IMR-90 (cell line): ENCODE measurements at regions of chr1 and their contacts with region 1.

Region 1: GRCh38 chr1:245045087-245045881 is 109.5 kb upstream of the KIF26B start:
- DNase-seq: peak; percentile 27
- ATAC-seq: peak; percentile 33
- H3K4me3 ChIP-seq: no peak overlapping the region
- H3K27ac ChIP-seq: no peak overlapping the region
- H3K4me1 ChIP-seq: no peaks in the 10 kb centered on the region; the same call in 1 of the 2 replicates
- H3K27me3 ChIP-seq: no peaks in the 10 kb centered on the region
- CTCF ChIP-seq: no peak
- POLR2A ChIP-seq: no peak
- RAD21 ChIP-seq: no peak

Region 2: DNA sequence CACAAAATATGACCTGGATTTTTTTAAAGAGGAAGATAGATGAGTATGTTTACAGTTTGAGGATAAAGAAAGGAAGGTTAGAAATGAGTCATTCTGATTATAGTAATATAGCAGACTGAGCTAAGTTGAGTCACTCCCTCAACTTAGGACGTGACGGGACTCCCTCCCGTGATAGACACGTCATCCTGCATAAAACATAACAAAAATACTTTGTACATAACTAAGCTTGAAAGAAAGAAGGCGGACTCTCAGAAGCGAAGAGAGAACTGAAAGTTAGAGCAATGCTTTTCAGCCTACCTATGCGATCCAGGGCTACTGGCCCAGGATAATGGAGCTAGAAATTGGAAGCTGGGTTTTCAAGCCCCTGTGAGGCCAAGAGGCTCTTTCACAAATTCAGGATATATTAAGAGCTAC is 445.3 kb before region 1 on chr1:
- CTCF ChIA-PET with region 1: interaction called, 4 read pairs
- POLR2A ChIA-PET with region 1: no interaction called
- dilution Hi-C with region 1: no loop called
- in situ Hi-C with region 1: loop called (anchors 5 kb)
- intact Hi-C with region 1: loop called (anchors 2 kb)
- DNase-seq: peak; percentile 98
- ATAC-seq: peak; percentile 98
- H3K4me3 ChIP-seq: peak overlapping the region; percentile 60
- H3K27ac ChIP-seq: peak overlapping the region; percentile 73; the same call in 1 of the 2 replicates
- H3K4me1 ChIP-seq: peaks cover 5% of the 10 kb centered on the region
- H3K27me3 ChIP-seq: peaks cover 7% of the 10 kb centered on the region; the same call in 1 of the 2 replicates
- CTCF ChIP-seq: no peak
- POLR2A ChIP-seq: peak; percentile 81
- RAD21 ChIP-seq: no peak

Region 3: GRCh38 chr1:244759158-244759655 is 286.1 kb before region 1 on chr1:
- CTCF ChIA-PET with region 1: no interaction called
- POLR2A ChIA-PET with region 1: no interaction called
- dilution Hi-C with region 1: no loop called
- in situ Hi-C with region 1: no loop called
- intact Hi-C with region 1: no loop called
- DNase-seq: no peak
- ATAC-seq: no peak
- H3K4me3 ChIP-seq: no peak overlapping the region
- H3K27ac ChIP-seq: no peak overlapping the region
- H3K4me1 ChIP-seq: peaks cover 5% of the 10 kb centered on the region; the same call in 1 of the 2 replicates
- H3K27me3 ChIP-seq: peaks cover 5% of the 10 kb centered on the region
- CTCF ChIP-seq: no peak
- POLR2A ChIP-seq: no peak
- RAD21 ChIP-seq: no peak

Region 4: GRCh38 chr1:244796718-244797406 is 248.4 kb before region 1 on chr1:
- CTCF ChIA-PET with region 1: interaction called, 4 read pairs
- POLR2A ChIA-PET with region 1: no interaction called
- dilution Hi-C with region 1: no loop called
- in situ Hi-C with region 1: no loop called
- intact Hi-C with region 1: loop called (anchors 1 kb)
- DNase-seq: peak; percentile 68
- ATAC-seq: peak; percentile 83
- H3K4me3 ChIP-seq: no peak overlapping the region
- H3K27ac ChIP-seq: no peak overlapping the region
- H3K4me1 ChIP-seq: peaks cover 3% of the 10 kb centered on the region
- H3K27me3 ChIP-seq: no peaks in the 10 kb centered on the region
- CTCF ChIP-seq: peak; percentile 86
- POLR2A ChIP-seq: no peak
- RAD21 ChIP-seq: peak; percentile 85

Region 5: DNA sequence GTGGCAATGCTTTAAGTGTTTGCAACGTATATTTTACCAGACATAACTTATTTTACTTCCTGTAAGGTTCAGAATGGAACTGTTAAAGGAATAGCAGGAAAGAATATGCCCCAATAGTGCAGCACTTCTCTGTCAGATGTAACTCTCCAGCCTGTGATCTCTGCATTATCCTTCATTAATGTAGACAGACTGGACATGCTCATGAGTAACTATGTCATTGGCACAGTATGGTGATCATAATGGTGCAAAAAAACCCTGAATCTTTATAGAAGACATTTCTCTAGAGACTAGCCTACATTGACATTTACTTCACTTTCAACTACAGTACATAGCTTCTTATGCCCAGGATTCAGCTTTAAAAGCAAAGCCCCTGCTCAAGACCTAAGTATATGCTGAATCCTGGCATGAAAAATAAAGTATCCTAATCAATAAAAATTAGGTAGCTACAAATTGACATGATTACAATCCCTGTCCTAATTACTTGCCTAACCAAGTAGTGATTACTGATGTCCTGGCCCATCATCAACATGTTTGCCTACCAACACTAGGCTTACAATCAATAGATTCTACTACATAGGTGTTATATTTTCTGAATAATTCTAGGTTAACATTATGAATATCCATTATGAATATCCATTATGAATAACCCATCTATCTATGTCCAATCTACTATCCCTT is 196.0 kb before region 1 on chr1:
- CTCF ChIA-PET with region 1: interaction called, 16 read pairs
- POLR2A ChIA-PET with region 1: no interaction called
- dilution Hi-C with region 1: no loop called
- in situ Hi-C with region 1: no loop called
- intact Hi-C with region 1: no loop called
- DNase-seq: no peak
- ATAC-seq: no peak
- H3K4me3 ChIP-seq: no peak overlapping the region
- H3K27ac ChIP-seq: no peak overlapping the region
- H3K4me1 ChIP-seq: peaks cover under 1% of the 10 kb centered on the region; the same call in 1 of the 2 replicates
- H3K27me3 ChIP-seq: no peaks in the 10 kb centered on the region
- CTCF ChIP-seq: no peak
- POLR2A ChIP-seq: peak; percentile 27
- RAD21 ChIP-seq: no peak

Region 6: DNA sequence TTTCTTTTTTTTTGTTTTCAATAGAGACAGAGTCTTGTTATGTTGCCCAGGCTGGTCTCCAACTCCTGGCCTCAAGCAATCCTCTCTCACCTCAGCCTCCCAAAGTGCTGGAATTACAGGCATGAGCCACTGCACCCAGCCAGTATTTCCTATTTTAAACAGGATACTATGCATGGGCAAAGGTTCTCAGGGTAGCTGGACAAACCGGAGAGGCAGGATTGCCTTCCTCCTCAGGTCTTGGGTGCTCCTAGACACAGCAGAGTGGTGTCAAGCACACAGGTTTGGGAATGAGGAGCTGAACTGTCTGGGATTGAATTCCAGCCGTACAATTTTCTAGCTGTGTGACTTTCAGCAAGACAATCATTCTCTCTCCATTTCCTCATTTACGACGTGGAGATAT is 158.0 kb before region 1 on chr1:
- CTCF ChIA-PET with region 1: no interaction called
- POLR2A ChIA-PET with region 1: no interaction called
- dilution Hi-C with region 1: no loop called
- in situ Hi-C with region 1: no loop called
- intact Hi-C with region 1: no loop called
- DNase-seq: no peak
- ATAC-seq: no peak
- H3K4me3 ChIP-seq: no peak overlapping the region
- H3K27ac ChIP-seq: no peak overlapping the region
- H3K4me1 ChIP-seq: no peaks in the 10 kb centered on the region
- H3K27me3 ChIP-seq: no peaks in the 10 kb centered on the region
- CTCF ChIP-seq: no peak
- POLR2A ChIP-seq: no peak
- RAD21 ChIP-seq: no peak

Region 7: GRCh38 chr1:244970661-244971551 is 74.4 kb before region 1 on chr1:
- CTCF ChIA-PET with region 1: interaction called, 6 read pairs
- POLR2A ChIA-PET with region 1: no interaction called
- dilution Hi-C with region 1: no loop called
- in situ Hi-C with region 1: no loop called
- intact Hi-C with region 1: loop called (anchors 2 kb)
- DNase-seq: peak; percentile 95
- ATAC-seq: peak; percentile 89
- H3K4me3 ChIP-seq: peak overlapping the region; percentile 63
- H3K27ac ChIP-seq: peak overlapping the region; percentile 98
- H3K4me1 ChIP-seq: peaks cover 7% of the 10 kb centered on the region
- H3K27me3 ChIP-seq: no peaks in the 10 kb centered on the region
- CTCF ChIP-seq: peak; percentile 65
- POLR2A ChIP-seq: peak; percentile 75
- RAD21 ChIP-seq: peak; percentile 43; the same call in 1 of the 2 replicates

Region 8: GRCh38 chr1:245264226-245264625 is 218.9 kb after region 1 on chr1:
- CTCF ChIA-PET with region 1: no interaction called
- POLR2A ChIA-PET with region 1: no interaction called
- dilution Hi-C with region 1: no loop called
- in situ Hi-C with region 1: no loop called
- intact Hi-C with region 1: no loop called
- DNase-seq: no peak
- ATAC-seq: no peak
- H3K4me3 ChIP-seq: no peak overlapping the region
- H3K27ac ChIP-seq: no peak overlapping the region
- H3K4me1 ChIP-seq: no peaks in the 10 kb centered on the region
- H3K27me3 ChIP-seq: no peaks in the 10 kb centered on the region
- CTCF ChIP-seq: no peak
- POLR2A ChIP-seq: no peak
- RAD21 ChIP-seq: no peak

Region 9: DNA sequence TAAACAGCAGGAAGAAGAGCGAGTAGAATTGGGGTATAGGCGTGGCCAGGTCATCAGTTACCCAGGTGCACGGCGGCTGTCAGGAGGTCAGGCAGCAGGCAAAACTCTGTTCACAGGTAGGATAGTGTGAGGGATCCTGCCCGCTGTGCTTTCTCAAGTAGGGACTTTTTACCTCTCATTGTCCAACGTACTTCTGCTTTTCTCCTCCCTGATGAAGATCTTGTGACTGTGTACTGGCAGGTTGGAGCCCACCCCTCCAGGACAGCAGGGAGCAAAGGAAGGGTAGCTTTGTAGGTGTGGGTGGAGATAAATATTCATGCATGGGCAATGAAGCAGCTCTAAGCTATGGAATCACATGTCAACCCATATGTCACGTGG is 483.0 kb after region 1 on chr1:
- CTCF ChIA-PET with region 1: no interaction called
- POLR2A ChIA-PET with region 1: no interaction called
- dilution Hi-C with region 1: no loop called
- in situ Hi-C with region 1: no loop called
- intact Hi-C with region 1: no loop called
- DNase-seq: no peak
- ATAC-seq: no peak
- H3K4me3 ChIP-seq: no peak overlapping the region
- H3K27ac ChIP-seq: no peak overlapping the region
- H3K4me1 ChIP-seq: no peaks in the 10 kb centered on the region
- H3K27me3 ChIP-seq: no peaks in the 10 kb centered on the region
- CTCF ChIP-seq: no peak
- POLR2A ChIP-seq: no peak
- RAD21 ChIP-seq: no peak